ENCODE measurements at regions of chr6 and their contacts with region 1.

Region 1: GRCh38 chr6:6547110-6547879 is 41.2 kb upstream of the LY86 start:
- DNase-seq: peak; percentile 94
- H3K4me3 ChIP-seq: peak overlapping the region; percentile 24 to 67 (median 40)
- H3K27ac ChIP-seq: no peak overlapping the region
- H3K4me1 ChIP-seq: peaks cover 9 to 22% (median 15%) of the 10 kb centered on the region in 6 donors
- H3K27me3 ChIP-seq: peaks cover 0 to 56% (median 20%) of the 10 kb centered on the region in 7 donors
- CTCF ChIP-seq: peak; percentile 89 to 99 (median 96)
- POLR2A ChIP-seq: no peak

Region 2: GRCh38 chr6:6057424-6058053 is 489.8 kb before region 1 on chr6:
- intact Hi-C with region 1: loop called (anchors 5 kb)
- DNase-seq: no peak
- H3K4me3 ChIP-seq: no peak overlapping the region
- H3K27ac ChIP-seq: no peak overlapping the region
- H3K4me1 ChIP-seq: no peaks in the 10 kb centered on the region
- H3K27me3 ChIP-seq: peaks cover 0 to 33% (median 0%) of the 10 kb centered on the region in 7 donors
- CTCF ChIP-seq: peak; percentile 20 to 79 (median 61)
- POLR2A ChIP-seq: no peak

Measured in spleen (tissue), 13 donors.